Activated naive CD4-positive, alpha-beta T cell treated with anti-CD3 and anti-CD28 coated beads for 36 hours (primary cell): ENCODE measurements at regions of chr1 and their contacts with region 1.

Region 1: GRCh38 chr1:2174348-2175054 is 20.1 kb downstream of the FAAP20 start:
- DNase-seq: peak; percentile 52
- H3K4me3 Mint-ChIP-seq: peak overlapping the region; percentile 32
- H3K27ac Mint-ChIP-seq: no peak overlapping the region
- H3K4me1 Mint-ChIP-seq: no peaks in the 10 kb centered on the region
- H3K27me3 Mint-ChIP-seq: no peaks in the 10 kb centered on the region

Region 2: DNA sequence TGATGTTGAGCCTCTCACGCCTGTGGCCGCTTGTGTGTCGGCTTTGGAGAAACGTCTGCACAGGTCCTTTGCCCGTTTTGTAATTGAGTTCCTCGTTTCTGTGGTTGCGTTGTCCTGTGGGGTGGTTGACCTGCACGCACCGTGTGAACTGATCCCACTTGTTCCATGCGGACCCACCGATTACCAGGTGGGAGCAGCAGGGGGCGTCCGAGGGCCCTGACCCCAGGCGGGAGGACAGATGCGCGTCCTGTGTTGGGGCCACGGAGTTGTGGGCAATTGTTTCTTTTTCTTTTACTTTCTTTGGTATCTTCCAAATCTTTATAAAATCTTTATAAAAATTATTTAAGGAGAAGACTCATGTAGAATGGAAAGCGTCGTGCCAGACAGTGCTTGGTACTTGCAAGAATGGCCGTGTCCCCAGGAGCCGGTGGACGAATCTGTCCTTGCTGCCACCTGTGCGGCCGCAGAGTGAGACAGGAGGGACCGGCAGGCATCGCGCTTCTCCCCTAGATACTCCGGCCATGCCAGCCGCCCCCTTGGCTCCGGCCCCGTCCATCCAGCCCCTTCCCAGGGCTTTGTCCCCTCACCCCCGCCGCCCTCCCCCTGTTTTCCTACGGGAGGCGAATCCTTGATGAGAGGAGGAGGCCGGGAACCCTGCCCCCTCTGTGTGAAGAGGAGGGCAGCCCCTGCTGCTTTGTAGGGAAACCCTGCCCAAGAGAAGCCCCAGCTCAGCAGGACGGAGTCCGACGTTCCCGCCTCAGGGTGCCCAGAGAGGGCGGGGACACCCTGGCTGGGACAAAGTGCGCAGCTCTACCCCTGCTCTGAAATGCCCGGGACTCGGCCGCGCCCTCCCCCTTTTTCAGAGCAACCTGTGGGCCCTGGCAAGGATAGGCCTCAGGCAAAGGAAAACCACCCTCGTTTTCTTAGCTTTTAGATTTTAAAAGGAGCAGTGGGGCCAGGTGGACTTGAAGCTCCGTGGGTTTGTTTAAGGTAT is 82.6 kb before region 1 on chr1:
- CTCF ChIA-PET with region 1: interaction called, 9 read pairs
- intact Hi-C with region 1: loop called (anchors 1 kb)
- DNase-seq: peak; percentile 67
- H3K4me3 Mint-ChIP-seq: no peak overlapping the region
- H3K27ac Mint-ChIP-seq: no peak overlapping the region
- H3K4me1 Mint-ChIP-seq: peaks cover 3% of the 10 kb centered on the region
- H3K27me3 Mint-ChIP-seq: no peaks in the 10 kb centered on the region

Region 3: GRCh38 chr1:2141036-2141435 is 33.5 kb before region 1 on chr1:
- CTCF ChIA-PET with region 1: interaction called, 12 read pairs
- intact Hi-C with region 1: no loop called
- DNase-seq: no peak
- H3K4me3 Mint-ChIP-seq: no peak overlapping the region
- H3K27ac Mint-ChIP-seq: no peak overlapping the region
- H3K4me1 Mint-ChIP-seq: peaks cover 7% of the 10 kb centered on the region
- H3K27me3 Mint-ChIP-seq: no peaks in the 10 kb centered on the region

Region 4: DNA sequence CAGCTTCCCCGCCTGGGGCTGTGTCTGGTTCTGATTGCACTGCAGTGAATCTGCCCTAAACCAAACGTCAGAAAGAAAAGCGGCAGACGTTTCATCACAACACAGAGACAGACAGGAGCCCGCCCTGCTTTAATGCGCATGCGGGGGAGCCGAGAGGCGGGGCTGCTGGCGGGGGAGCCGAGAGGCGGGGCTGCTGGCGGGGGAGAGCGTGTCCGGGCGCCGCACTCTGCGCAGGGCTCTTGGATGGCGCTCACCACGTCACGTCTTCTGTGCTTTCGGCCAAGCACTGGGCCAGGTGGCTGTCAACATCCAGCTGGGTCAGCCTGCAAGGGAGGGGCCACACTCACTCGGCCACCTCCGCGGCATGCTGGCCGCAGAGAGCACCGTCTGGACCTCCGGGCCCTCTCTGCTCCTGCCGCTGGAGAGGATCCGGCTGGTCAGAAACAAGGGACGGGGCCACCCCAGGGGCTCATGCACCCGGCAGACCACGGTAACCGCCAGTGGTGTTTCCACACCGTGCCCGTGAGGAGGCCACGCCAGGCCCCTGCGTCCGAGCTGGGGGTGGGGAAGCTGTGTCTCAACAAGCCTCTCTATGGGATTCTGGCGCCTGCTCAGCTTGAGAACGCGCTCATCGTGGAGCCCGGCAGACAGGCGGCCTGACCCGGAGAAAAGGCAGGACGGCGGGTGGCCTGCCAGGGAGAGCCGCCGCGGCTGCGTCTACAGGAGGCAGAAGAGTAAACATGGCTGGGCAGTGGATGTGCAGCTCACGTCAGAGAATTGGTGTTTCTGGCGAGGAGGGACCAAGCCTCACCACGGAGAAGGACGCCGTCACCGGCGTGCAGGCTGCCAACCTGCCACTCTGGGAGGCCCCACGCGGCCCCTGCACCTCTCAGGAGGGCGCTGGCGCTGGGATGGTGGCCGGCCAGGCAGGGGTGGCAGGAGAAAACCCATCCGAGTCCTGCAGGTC is 15.2 kb after region 1 on chr1:
- CTCF ChIA-PET with region 1: interaction called, 11 read pairs
- intact Hi-C with region 1: no loop called
- DNase-seq: peak; percentile 95
- H3K4me3 Mint-ChIP-seq: peak overlapping the region; percentile 74
- H3K27ac Mint-ChIP-seq: peak overlapping the region; percentile 91
- H3K4me1 Mint-ChIP-seq: peaks cover 25% of the 10 kb centered on the region
- H3K27me3 Mint-ChIP-seq: no peaks in the 10 kb centered on the region

Region 5: DNA sequence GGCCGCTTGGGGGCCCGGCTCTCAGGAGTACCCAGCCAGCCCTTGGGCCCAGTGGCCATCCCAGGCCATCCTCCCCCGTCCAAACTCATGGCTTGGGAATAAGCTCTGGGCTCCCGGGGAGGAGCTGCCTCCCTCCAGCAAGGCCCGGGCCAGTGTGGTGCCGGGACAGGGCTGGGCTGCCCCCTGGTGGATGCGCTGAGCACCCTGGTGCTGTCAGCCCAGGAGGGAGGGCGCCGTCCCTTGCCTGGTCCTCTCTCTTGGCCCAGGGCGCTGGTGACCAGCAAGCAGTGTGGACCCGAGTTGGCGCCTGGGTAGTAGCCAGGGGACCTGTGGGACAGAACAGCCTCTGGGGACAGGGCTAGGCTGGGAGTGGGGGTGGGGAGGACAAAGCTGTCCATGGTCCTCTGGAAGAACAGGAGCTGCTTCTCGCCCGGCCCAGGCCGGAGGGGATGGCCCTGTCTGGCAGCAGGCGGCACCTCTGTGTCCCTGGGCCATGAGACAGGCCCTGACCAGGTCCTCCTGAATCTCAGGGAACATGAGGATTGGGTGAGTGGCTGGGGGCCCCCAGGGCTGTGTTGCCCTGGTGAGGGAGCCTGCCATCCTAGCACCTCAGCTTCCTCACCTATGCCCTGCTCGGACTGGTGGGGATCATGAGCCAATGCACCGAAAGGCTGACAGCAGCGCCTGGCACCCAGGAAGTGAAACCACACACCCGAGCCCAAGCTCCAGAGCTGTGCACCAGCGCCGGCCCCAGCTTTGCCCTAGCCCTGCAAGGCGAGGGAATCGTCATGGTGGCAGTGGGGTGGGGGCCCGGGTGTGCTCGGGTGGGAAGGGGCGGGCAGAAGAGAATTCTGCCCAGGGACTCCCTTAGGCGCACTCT is 207.5 kb after region 1 on chr1:
- CTCF ChIA-PET with region 1: interaction called, 10 read pairs
- intact Hi-C with region 1: no loop called
- DNase-seq: peak; percentile 86
- H3K4me3 Mint-ChIP-seq: no peak overlapping the region
- H3K27ac Mint-ChIP-seq: no peak overlapping the region
- H3K4me1 Mint-ChIP-seq: no peaks in the 10 kb centered on the region
- H3K27me3 Mint-ChIP-seq: no peaks in the 10 kb centered on the region

Region 6: GRCh38 chr1:3530926-3531818 is 1356.7 kb after region 1 on chr1:
- CTCF ChIA-PET with region 1: no interaction called
- intact Hi-C with region 1: no loop called
- DNase-seq: peak; percentile 76
- H3K4me3 Mint-ChIP-seq: peak overlapping the region; percentile 74
- H3K27ac Mint-ChIP-seq: peak overlapping the region; percentile 68
- H3K4me1 Mint-ChIP-seq: peaks cover 10% of the 10 kb centered on the region
- H3K27me3 Mint-ChIP-seq: no peaks in the 10 kb centered on the region